ENCODE measurements at regions of chr4 and their contacts with region 1.

Region 1: GRCh38 chr4:6327041-6327917 is 57.6 kb downstream of the WFS1 start:
- DNase-seq: peak; percentile 95
- H3K4me3 ChIP-seq: no peak overlapping the region
- H3K27ac ChIP-seq: no peak overlapping the region
- H3K4me1 ChIP-seq: peaks cover 0 to 34% (median 24%) of the 10 kb centered on the region in 6 donors
- H3K27me3 ChIP-seq: peaks cover 0 to 82% (median 15%) of the 10 kb centered on the region in 7 donors
- CTCF ChIP-seq: peak; percentile 86 to 98 (median 96)
- POLR2A ChIP-seq: no peak

Region 2: GRCh38 chr4:5998333-5998936 is 328.8 kb before region 1 on chr4:
- intact Hi-C with region 1: loop called (anchors 10 kb)
- DNase-seq: no peak
- H3K4me3 ChIP-seq: no peak overlapping the region
- H3K27ac ChIP-seq: no peak overlapping the region
- H3K4me1 ChIP-seq: no peaks in the 10 kb centered on the region
- H3K27me3 ChIP-seq: peaks cover 0 to 52% (median 0%) of the 10 kb centered on the region in 7 donors
- CTCF ChIP-seq: peak in 10 of 11 experiments; percentile 44 to 86 (median 78)
- POLR2A ChIP-seq: no peak

Region 3: DNA sequence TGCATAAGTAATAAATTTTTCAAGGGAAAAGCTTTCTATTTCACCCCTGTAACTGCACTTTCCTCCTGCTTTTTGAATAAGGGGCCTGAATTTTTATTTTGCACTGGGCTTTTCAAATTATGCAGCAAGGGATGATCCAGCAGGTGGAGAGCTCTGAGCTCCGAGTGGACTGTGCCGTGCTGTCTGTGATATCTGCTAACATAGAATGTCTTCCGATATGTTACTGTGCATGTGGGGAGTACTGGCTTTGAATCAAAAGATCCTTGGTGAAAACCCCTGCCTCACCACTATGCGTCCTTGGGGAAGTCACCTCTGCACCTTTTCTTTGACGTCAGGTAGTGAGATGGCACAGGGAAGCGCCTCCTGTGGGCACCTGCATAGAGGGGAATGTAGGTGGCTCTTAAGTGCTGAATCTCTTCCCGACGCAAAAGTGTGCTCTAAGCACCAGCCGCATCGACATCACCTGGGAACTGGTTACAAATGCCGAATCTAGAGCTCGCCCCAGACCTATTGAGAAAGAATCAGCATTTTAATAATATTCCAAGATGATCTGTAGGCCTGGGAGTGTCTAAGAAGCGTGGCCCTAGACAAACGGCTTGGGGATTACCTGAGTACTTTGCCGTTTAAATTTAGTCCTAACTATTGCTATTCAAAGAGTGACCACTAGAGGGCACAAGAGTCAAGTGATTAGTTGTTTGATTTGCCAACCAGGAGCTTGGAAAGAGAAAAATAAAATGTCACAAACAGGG is 76.9 kb before region 1 on chr4:
- intact Hi-C with region 1: loop called (anchors 5 kb)
- DNase-seq: peak; percentile 51
- H3K4me3 ChIP-seq: no peak overlapping the region
- H3K27ac ChIP-seq: no peak overlapping the region
- H3K4me1 ChIP-seq: peaks cover 0 to 10% (median 4%) of the 10 kb centered on the region in 6 donors
- H3K27me3 ChIP-seq: peaks cover 0 to 52% (median 22%) of the 10 kb centered on the region in 7 donors
- CTCF ChIP-seq: peak; percentile 52 to 86 (median 80)
- POLR2A ChIP-seq: no peak

Region 4: GRCh38 chr4:6402566-6403398 is 75.5 kb after region 1 on chr4:
- intact Hi-C with region 1: no loop called
- DNase-seq: no peak
- H3K4me3 ChIP-seq: no peak overlapping the region
- H3K27ac ChIP-seq: no peak overlapping the region
- H3K4me1 ChIP-seq: no peaks in the 10 kb centered on the region
- H3K27me3 ChIP-seq: peaks cover 0 to 85% (median 23%) of the 10 kb centered on the region in 7 donors
- CTCF ChIP-seq: no peak
- POLR2A ChIP-seq: no peak

Region 5: GRCh38 chr4:6546681-6547447 is 219.6 kb after region 1 on chr4:
- intact Hi-C with region 1: loop called (anchors 5 kb)
- DNase-seq: no peak
- H3K4me3 ChIP-seq: no peak overlapping the region
- H3K27ac ChIP-seq: no peak overlapping the region
- H3K4me1 ChIP-seq: no peaks in the 10 kb centered on the region
- H3K27me3 ChIP-seq: peaks cover 0 to 92% (median 3%) of the 10 kb centered on the region in 7 donors
- CTCF ChIP-seq: peak; percentile 32 to 83 (median 77)
- POLR2A ChIP-seq: no peak

Measured in spleen (tissue), 13 donors.